ENCODE measurements at regions of chr5 and their contacts with region 1.

Region 1: GRCh38 chr5:78269088-78269703 is 25.3 kb downstream of the AP3B1 start:
- DNase-seq: peak; percentile 35
- H3K4me3 ChIP-seq: no peak overlapping the region
- H3K27ac ChIP-seq: no peak overlapping the region
- H3K4me1 ChIP-seq: no peaks in the 10 kb centered on the region
- H3K27me3 ChIP-seq: no peaks in the 10 kb centered on the region
- CTCF ChIP-seq: no peak
- POLR2A ChIP-seq: no peak

Region 2: GRCh38 chr5:78056901-78057513 is 212.2 kb before region 1 on chr5:
- CTCF ChIA-PET with region 1: interaction called, 5 read pairs
- POLR2A ChIA-PET with region 1: no interaction called
- dilution Hi-C with region 1: no loop called
- intact Hi-C with region 1: loop called (anchors 2 kb)
- DNase-seq: peak; percentile 83
- H3K4me3 ChIP-seq: peak overlapping the region; percentile 15 to 70 (median 28)
- H3K27ac ChIP-seq: peak overlapping the region; percentile 89
- H3K4me1 ChIP-seq: peaks cover 20% of the 10 kb centered on the region
- H3K27me3 ChIP-seq: no peaks in the 10 kb centered on the region
- CTCF ChIP-seq: peak; percentile 34 to 40
- POLR2A ChIP-seq: no peak